ENCODE measurements at regions of chr1 and their contacts with region 1.

Region 1: DNA sequence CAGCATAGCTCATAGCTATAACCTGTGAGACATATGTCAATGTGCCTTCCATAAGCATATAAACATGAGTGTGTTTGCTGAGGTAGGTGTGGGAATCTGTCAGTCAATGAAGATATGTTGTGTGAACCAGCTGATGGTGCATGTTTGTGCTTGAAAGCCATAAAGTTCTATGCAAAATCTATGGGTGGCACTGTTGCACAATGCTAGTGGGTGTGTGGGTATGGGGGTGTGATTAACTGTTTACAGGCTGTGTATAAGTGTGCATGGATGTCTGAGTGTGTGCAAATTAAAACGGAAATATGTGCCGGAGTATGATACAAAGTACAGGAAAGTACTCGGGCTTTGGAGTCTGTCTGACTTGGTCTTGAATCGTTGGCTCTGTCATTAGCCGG is 1.0 kb upstream of the ATP2B4 start:
- DNase-seq: peak; percentile 76
- ATAC-seq: peak; percentile 55
- H3K4me3 ChIP-seq: peak overlapping the region in 3 of 5 experiments; percentile 61 to 71 (median 67)
- H3K4me3 Mint-ChIP-seq: peak overlapping the region; percentile 95
- H3K27ac ChIP-seq: peak overlapping the region in 1 of 2 donors; percentile 73
- H3K27ac Mint-ChIP-seq: peak overlapping the region; percentile 73
- H3K4me1 ChIP-seq: peaks cover 39 to 50% of the 10 kb centered on the region in 2 donors
- H3K4me1 Mint-ChIP-seq: peaks cover 45% of the 10 kb centered on the region
- H3K27me3 ChIP-seq: no peaks in the 10 kb centered on the region
- H3K27me3 Mint-ChIP-seq: peaks cover 5% of the 10 kb centered on the region
- CTCF ChIP-seq: peak; percentile 70

Region 2: GRCh38 chr1:203304919-203305808 is 320.5 kb before region 1 on chr1 and contains the start of gene BTG2:
- CTCF ChIA-PET with region 1: no interaction called
- POLR2A ChIA-PET with region 1: no interaction called
- intact Hi-C with region 1: no loop called
- DNase-seq: peak; percentile 96
- ATAC-seq: peak; percentile 80
- H3K4me3 ChIP-seq: peak within 1 kb of the TSS; percentile 96 to 99 (median 99)
- H3K4me3 Mint-ChIP-seq: peak within 1 kb of the TSS; percentile 99
- H3K27ac ChIP-seq: peak within 1 kb of the TSS; percentile 100
- H3K27ac Mint-ChIP-seq: peak within 1 kb of the TSS; percentile 99
- H3K4me1 ChIP-seq: peaks cover 65 to 78% of the 10 kb centered on the region in 2 donors
- H3K4me1 Mint-ChIP-seq: peaks cover 70% of the 10 kb centered on the region
- H3K27me3 ChIP-seq: no peaks in the 10 kb centered on the region
- H3K27me3 Mint-ChIP-seq: no peaks in the 10 kb centered on the region
- CTCF ChIP-seq: no peak
- total RNA-seq, gene BTG2: 505 and 508 TPM in 2 replicates

Region 3: DNA sequence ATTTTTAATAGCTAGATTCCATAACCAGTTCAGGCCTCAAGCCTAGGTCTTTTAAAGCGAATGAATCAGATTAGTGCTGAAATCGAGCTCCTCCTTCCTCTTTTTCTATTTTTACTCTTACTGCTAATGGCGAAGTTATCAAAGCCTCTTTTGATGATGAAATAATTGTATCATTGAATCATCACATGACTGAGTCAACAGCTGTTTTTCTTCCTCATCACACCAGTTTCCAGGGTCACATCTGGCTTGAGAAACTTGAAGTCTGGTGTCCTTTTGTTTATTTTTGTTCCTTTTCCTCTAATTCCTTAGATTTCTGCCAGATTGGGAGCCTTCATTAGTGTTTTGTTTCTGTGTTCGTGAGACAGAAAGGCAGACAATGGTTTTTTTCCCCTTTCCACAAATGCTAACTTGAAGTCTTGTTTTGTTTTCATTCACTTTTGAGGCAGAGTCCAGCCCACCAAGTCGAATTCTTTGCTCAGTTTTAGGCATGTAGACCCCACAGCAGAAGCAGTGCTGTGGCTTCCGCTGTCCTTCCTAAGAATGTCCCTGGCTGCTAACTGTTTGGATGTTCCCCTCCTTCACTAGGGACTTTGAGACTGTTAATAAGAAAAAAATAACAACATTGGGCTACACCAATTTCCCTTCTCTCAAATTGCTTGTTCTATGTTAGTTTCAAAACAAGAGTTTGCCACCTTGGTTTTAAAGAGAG is 222.8 kb before region 1 on chr1:
- CTCF ChIA-PET with region 1: no interaction called
- POLR2A ChIA-PET with region 1: no interaction called
- intact Hi-C with region 1: no loop called
- DNase-seq: no peak
- ATAC-seq: no peak
- H3K4me3 ChIP-seq: no peak overlapping the region
- H3K4me3 Mint-ChIP-seq: no peak overlapping the region
- H3K27ac ChIP-seq: no peak overlapping the region
- H3K27ac Mint-ChIP-seq: no peak overlapping the region
- H3K4me1 ChIP-seq: no peaks in the 10 kb centered on the region
- H3K4me1 Mint-ChIP-seq: peaks cover 4% of the 10 kb centered on the region
- H3K27me3 ChIP-seq: no peaks in the 10 kb centered on the region
- H3K27me3 Mint-ChIP-seq: peaks cover 38% of the 10 kb centered on the region
- CTCF ChIP-seq: no peak

Region 4: DNA sequence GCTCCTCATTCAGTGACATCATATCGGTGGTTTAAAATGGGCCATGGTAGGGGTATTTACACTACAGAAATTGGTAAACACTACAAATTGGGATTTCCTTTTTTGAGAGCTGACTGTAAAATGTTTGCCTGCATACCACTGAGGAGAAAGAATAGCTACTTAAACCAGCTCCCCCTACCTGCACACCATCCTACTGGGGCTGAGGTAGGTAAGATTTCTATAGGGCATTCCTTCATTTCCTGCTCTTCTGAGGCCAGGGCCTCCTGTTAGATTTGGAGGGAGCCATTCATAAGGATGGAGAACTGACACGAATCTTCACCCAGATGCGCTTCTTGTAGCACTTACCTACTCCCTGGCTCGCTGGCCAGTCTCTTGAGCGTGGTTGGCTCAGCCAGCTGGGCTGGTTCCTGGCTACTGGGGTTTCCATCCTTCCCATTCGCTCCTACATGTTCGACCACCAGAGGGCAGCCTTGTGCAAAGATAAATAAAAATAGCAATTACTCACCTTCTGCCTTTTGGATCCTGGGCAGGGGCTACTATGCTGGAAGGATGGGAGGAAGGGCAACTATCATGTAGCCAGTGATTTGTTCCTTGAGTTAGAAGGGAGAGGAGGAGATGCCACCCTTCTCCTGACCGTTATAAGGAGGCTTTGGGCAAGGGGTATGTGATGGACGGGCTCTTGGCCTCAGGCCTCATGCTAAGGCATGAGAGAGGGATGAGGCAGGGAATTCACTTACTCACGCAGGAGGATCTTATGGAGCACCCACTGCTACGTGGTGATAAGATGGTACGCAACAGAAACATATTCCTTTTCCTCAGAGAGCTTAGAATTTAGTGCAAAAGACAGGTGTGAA is 121.0 kb before region 1 on chr1:
- CTCF ChIA-PET with region 1: interaction called, 16 read pairs
- POLR2A ChIA-PET with region 1: no interaction called
- intact Hi-C with region 1: loop called (anchors 2 kb)
- DNase-seq: peak; percentile 80
- ATAC-seq: peak; percentile 72
- H3K4me3 ChIP-seq: no peak overlapping the region
- H3K4me3 Mint-ChIP-seq: no peak overlapping the region
- H3K27ac ChIP-seq: no peak overlapping the region
- H3K27ac Mint-ChIP-seq: no peak overlapping the region
- H3K4me1 ChIP-seq: no peaks in the 10 kb centered on the region
- H3K4me1 Mint-ChIP-seq: peaks cover 2% of the 10 kb centered on the region
- H3K27me3 ChIP-seq: peaks cover 0 to 7% (median 0%) of the 10 kb centered on the region in 4 experiments
- H3K27me3 Mint-ChIP-seq: peaks cover 16% of the 10 kb centered on the region
- CTCF ChIP-seq: peak; percentile 93

Region 5: GRCh38 chr1:203558064-203558760 is 67.4 kb before region 1 on chr1:
- CTCF ChIA-PET with region 1: no interaction called
- POLR2A ChIA-PET with region 1: no interaction called
- intact Hi-C with region 1: no loop called
- DNase-seq: no peak
- ATAC-seq: no peak
- H3K4me3 ChIP-seq: no peak overlapping the region
- H3K4me3 Mint-ChIP-seq: no peak overlapping the region
- H3K27ac ChIP-seq: no peak overlapping the region
- H3K27ac Mint-ChIP-seq: no peak overlapping the region
- H3K4me1 ChIP-seq: no peaks in the 10 kb centered on the region
- H3K4me1 Mint-ChIP-seq: peaks cover 2% of the 10 kb centered on the region
- H3K27me3 ChIP-seq: no peaks in the 10 kb centered on the region
- H3K27me3 Mint-ChIP-seq: peaks cover 18% of the 10 kb centered on the region
- CTCF ChIP-seq: no peak

Region 6: GRCh38 chr1:203584035-203584434 is 41.6 kb before region 1 on chr1:
- CTCF ChIA-PET with region 1: no interaction called
- POLR2A ChIA-PET with region 1: no interaction called
- intact Hi-C with region 1: no loop called
- DNase-seq: no peak
- ATAC-seq: no peak
- H3K4me3 ChIP-seq: no peak overlapping the region
- H3K4me3 Mint-ChIP-seq: no peak overlapping the region
- H3K27ac ChIP-seq: no peak overlapping the region
- H3K27ac Mint-ChIP-seq: no peak overlapping the region
- H3K4me1 ChIP-seq: no peaks in the 10 kb centered on the region
- H3K4me1 Mint-ChIP-seq: no peaks in the 10 kb centered on the region
- H3K27me3 ChIP-seq: no peaks in the 10 kb centered on the region
- H3K27me3 Mint-ChIP-seq: peaks cover 23% of the 10 kb centered on the region
- CTCF ChIP-seq: no peak

Region 7: DNA sequence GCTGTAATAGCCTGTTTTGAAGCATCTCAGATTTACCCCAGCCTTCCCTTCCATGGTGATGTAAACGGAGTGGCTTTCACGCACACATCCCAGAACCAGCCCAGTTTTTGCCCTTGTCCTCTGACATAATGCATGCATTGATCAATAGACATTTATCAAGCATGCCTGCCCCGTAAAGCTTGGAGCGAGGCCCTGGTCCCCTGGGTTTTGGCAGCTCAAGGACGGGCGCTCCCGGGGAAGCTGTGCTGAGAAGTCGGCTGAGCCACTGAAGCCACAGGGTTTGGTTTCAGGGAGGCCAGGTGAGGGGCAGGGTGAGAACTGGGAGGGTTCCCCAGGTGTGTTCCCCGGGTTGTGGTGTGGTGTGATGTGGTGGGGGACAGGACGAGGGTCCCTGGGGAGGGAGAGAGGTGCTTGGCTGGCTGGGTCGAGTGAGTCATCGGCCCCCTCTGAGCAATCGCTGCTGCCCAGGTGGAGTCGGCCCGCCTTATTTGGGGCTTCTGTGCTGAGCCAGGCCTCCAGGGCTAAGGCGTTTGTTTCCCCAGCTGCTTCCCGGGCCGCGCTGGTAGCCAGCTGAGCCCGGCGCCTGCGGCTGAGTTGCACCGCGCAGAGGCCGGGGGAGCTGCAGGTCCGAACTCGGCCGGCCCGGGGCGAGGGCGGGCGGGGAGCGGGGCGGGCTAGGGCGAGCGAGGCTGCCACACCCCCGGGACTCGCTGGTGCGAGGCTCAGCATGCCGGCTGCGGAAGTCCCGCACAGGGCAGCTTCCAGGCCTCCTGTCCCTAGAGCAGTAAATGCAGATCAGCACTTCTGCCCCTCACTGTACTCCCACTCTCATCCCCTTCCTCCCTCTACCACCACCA is 24.6 kb after region 1 on chr1:
- CTCF ChIA-PET with region 1: interaction called, 7 read pairs
- POLR2A ChIA-PET with region 1: interaction called, 7 read pairs
- intact Hi-C with region 1: loop called (anchors 1 kb)
- DNase-seq: peak; percentile 68
- ATAC-seq: peak; percentile 86
- H3K4me3 ChIP-seq: peak overlapping the region in 4 of 5 experiments; percentile 37 to 61 (median 44)
- H3K4me3 Mint-ChIP-seq: peak overlapping the region; percentile 87
- H3K27ac ChIP-seq: peak overlapping the region; percentile 59
- H3K27ac Mint-ChIP-seq: peak overlapping the region; percentile 91
- H3K4me1 ChIP-seq: peaks cover 21 to 36% of the 10 kb centered on the region in 2 donors
- H3K4me1 Mint-ChIP-seq: peaks cover 35% of the 10 kb centered on the region
- H3K27me3 ChIP-seq: peaks cover 0 to 5% (median 0%) of the 10 kb centered on the region in 4 experiments
- H3K27me3 Mint-ChIP-seq: no peaks in the 10 kb centered on the region
- CTCF ChIP-seq: no peak

Region 8: GRCh38 chr1:203754455-203754864 is 128.8 kb after region 1 on chr1:
- CTCF ChIA-PET with region 1: no interaction called
- POLR2A ChIA-PET with region 1: no interaction called
- intact Hi-C with region 1: loop called (anchors 5 kb)
- DNase-seq: peak; percentile 76
- ATAC-seq: peak; percentile 68
- H3K4me3 ChIP-seq: peak overlapping the region in 4 of 5 experiments; percentile 0 to 33 (median 20)
- H3K4me3 Mint-ChIP-seq: peak overlapping the region; percentile 67
- H3K27ac ChIP-seq: peak overlapping the region; percentile 85
- H3K27ac Mint-ChIP-seq: peak overlapping the region; percentile 96
- H3K4me1 ChIP-seq: peaks cover 35 to 41% of the 10 kb centered on the region in 2 donors
- H3K4me1 Mint-ChIP-seq: peaks cover 41% of the 10 kb centered on the region
- H3K27me3 ChIP-seq: no peaks in the 10 kb centered on the region
- H3K27me3 Mint-ChIP-seq: no peaks in the 10 kb centered on the region
- CTCF ChIP-seq: no peak

Region 9: DNA sequence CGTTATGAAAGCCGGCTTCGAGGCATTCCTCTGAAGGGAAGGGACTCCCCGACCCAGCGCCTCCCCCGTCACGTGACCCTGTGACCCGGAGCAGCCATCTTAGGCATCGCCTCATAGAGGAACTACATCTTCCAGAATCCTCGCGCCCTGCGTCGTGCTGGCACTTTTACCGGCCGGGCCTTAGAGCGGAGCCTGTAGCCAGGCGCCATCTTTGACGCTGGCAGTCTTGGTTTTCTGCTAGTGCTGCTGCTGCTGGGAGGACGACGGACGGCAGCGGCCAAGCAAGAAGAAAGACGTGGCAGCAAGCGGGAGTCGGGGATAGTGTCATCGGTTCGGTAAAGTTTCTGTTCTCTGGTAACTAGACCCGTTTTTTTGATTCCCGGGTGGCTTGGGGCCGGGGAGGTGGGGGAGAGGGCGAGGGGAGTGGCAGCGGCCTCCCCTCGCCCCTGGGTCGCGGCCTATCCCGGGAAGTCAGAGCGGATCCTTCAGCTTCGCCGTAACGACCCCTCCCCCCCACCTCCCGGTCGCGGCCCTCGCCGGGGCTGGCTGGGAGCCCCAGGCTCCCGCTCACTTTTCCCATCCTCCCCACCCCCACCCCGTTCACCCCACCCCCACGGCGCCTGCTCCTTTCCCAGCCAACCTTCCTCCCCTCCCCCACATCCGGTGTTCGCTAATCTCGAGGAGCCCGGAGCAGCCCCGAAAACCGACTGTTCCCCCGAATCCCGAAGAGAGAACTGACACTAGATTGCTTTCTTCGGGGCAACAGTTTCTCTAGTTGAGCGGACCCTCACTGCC is 170.0 kb after region 1 on chr1 and contains the starts of genes ZBED6 and ZC3H11A:
- CTCF ChIA-PET with region 1: interaction called, 3 read pairs
- POLR2A ChIA-PET with region 1: no interaction called
- intact Hi-C with region 1: loop called (anchors 1 kb)
- DNase-seq: peak; percentile 99
- ATAC-seq: peak; percentile 98
- H3K4me3 ChIP-seq: peak within 1 kb of the TSS; percentile 62 to 86 (median 78)
- H3K4me3 Mint-ChIP-seq: peak within 1 kb of the TSS; percentile 88
- H3K27ac ChIP-seq: peak within 1 kb of the TSS; percentile 85 to 94
- H3K27ac Mint-ChIP-seq: peak within 1 kb of the TSS; percentile 97
- H3K4me1 ChIP-seq: peaks cover 37% of the 10 kb centered on the region in 2 donors
- H3K4me1 Mint-ChIP-seq: peaks cover 49% of the 10 kb centered on the region
- H3K27me3 ChIP-seq: no peaks in the 10 kb centered on the region
- H3K27me3 Mint-ChIP-seq: no peaks in the 10 kb centered on the region
- CTCF ChIP-seq: no peak
- total RNA-seq, gene ZBED6: 39.7 and 40.0 TPM in 2 replicates
- total RNA-seq, gene ZC3H11A: 117 and 130 TPM in 2 replicates